Right cardiac atrium (tissue), 5 donors: ENCODE measurements at regions of chr12 and their contacts with region 1.

Region 1: GRCh38 chr12:120598674-120599463 is 17.7 kb upstream of the POP5 start:
- DNase-seq: no peak
- ATAC-seq: peak; percentile 77 to 84
- H3K4me3 ChIP-seq: no peak overlapping the region
- H3K27ac ChIP-seq: peak overlapping the region; percentile 13
- H3K4me1 ChIP-seq: no peaks in the 10 kb centered on the region
- H3K27me3 ChIP-seq: no peaks in the 10 kb centered on the region

Region 2: DNA sequence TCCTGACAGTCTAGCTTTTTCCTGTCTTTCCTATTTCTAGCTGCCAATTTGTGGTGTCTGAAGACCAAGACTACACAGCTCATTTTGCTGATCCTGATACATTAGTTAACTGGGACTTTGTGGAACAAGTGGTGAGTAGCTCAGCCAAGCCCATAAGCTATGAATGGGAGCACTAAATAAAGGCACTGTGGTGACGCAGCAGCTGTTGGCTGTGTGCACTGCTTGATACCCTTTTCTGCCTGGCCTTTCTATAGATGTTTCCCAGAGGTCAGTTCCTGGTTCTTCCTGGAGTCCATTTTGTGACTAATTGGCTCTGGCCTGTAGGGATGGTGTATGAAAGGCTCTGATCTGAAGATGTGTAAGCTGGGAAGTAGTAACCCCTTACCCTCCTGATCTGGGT is 44.2 kb before region 1 on chr12:
- intact Hi-C with region 1: no loop called
- DNase-seq: no peak
- ATAC-seq: peak in 1 of 2 donors; percentile 58
- H3K4me3 ChIP-seq: no peak overlapping the region
- H3K27ac ChIP-seq: peak overlapping the region; percentile 56
- H3K4me1 ChIP-seq: peaks cover 10% of the 10 kb centered on the region
- H3K27me3 ChIP-seq: no peaks in the 10 kb centered on the region

Region 3: DNA sequence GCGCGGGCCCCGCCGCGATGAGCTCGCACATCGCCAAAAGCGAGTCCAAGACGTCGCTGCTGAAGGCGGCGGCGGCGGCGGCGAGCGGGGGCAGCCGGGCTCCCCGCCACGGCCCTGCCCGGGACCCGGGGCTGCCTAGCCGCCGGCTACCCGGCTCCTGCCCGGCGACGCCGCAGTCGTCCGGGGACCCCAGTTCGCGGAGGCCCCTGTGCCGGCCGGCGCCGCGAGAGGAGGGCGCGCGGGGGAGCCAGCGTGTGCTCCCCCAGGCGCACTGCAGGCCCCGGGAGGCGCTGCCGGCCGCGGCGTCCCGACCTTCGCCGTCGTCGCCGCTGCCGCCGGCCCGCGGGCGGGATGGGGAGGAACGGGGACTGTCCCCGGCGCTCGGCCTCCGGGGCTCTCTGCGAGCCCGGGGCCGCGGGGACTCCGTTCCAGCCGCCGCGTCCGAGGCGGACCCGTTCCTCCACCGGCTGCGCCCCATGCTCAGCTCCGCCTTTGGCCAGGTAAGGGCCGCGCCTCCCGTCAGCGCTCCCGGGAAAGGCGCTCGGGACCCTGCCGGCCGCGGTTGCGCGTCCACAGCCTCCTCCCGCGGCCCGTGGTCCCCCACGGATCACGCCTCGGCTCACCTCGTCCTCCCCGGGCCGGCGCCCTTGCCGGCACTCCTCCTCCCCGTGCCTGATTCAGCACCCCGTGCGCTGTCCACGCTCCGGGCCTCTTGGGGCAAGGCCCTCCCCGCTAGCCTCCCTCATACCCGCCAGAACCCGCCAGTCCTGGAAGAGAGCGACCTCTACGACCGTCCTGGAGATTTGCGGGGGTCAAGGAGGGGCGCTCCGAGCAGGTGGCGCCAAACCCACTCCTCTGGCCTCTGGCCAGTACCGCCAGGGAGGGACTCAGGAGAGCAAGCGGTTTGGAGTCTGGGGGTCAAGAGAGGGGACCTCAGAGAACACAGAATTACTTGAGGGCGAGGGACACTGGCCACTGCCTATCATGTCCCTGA is 42.3 kb after region 1 on chr12:
- intact Hi-C with region 1: loop called in 1 of 4 experiments (anchors 10 kb)
- DNase-seq: peak; percentile 60 to 83 (median 79)
- ATAC-seq: peak; percentile 87 to 88
- H3K4me3 ChIP-seq: peak overlapping the region; percentile 94
- H3K27ac ChIP-seq: no peak overlapping the region
- H3K4me1 ChIP-seq: no peaks in the 10 kb centered on the region
- H3K27me3 ChIP-seq: no peaks in the 10 kb centered on the region

Region 4: GRCh38 chr12:120677765-120678473 is 79.0 kb after region 1 on chr12:
- intact Hi-C with region 1: no loop called
- DNase-seq: peak in 1 of 3 donors; percentile 66
- ATAC-seq: peak; percentile 45 to 86
- H3K4me3 ChIP-seq: no peak overlapping the region
- H3K27ac ChIP-seq: peak overlapping the region; percentile 65
- H3K4me1 ChIP-seq: peaks cover 3% of the 10 kb centered on the region
- H3K27me3 ChIP-seq: no peaks in the 10 kb centered on the region